Spleen (tissue), 13 donors: ENCODE measurements at regions of chr5 and their contacts with region 1.

Region 1: DNA sequence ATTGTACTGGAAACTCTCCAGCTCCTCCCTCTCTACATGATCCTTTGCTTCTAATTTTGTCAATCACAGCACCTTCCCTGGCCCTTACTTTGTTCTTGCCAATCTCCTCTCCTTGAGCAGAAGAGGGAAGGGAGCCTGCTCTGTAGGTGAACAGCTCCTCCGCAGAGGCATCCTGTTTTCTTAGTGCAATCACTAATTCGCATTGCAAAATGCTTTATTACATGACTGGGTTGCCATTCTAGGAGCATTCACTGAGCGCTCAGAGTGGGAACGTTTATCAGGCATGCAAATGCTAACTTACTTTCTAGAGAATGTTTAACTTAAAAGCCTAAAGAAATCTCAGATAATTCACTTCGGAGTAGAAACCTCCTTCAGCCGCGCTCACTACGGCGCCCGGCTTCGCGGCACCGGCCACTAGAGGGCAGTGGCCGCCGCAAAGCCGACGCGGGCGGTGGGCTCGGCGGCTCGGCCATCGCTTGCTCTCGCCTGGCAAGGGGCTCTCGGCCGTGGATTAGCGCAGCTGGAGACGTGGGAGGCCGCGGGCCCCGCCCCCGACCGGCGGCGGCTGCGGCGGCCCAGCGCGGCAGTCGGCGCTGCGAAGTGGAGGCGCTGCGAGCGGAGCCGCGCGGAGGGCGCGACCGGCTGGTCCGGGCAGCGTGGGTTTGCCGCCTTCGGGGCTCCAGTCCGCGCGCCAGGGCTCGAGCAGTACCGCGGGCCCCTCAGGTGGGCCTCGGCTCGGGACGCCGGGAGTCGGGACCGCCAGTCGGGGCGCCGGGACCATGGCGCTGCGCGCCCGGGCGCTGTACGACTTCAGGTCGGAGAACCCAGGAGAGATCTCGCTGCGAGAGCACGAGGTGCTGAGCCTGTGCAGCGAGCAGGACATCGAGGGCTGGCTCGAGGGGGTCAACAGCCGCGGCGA is at the start of gene SNX18:
- DNase-seq: peak; percentile 99
- H3K4me3 ChIP-seq: peak within 1 kb of the TSS; percentile 70 to 97 (median 90)
- H3K27ac ChIP-seq: peak within 1 kb of the TSS; percentile 84 to 99 (median 96)
- H3K4me1 ChIP-seq: peaks cover 31 to 56% (median 45%) of the 10 kb centered on the region in 6 donors
- H3K27me3 ChIP-seq: no peaks in the 10 kb centered on the region
- CTCF ChIP-seq: peak; percentile 91 to 99 (median 97)
- POLR2A ChIP-seq: peak in 2 of 3 donors; percentile 60 to 61
- total RNA-seq, gene SNX18: 59.2 to 82.5 (median 71.9) TPM

Region 2: GRCh38 chr5:54206580-54207229 is 310.7 kb before region 1 on chr5:
- intact Hi-C with region 1: no loop called
- DNase-seq: no peak
- H3K4me3 ChIP-seq: no peak overlapping the region
- H3K27ac ChIP-seq: no peak overlapping the region
- H3K4me1 ChIP-seq: peaks cover 0 to 21% (median 0%) of the 10 kb centered on the region in 6 donors
- H3K27me3 ChIP-seq: no peaks in the 10 kb centered on the region
- CTCF ChIP-seq: no peak
- POLR2A ChIP-seq: no peak

Region 3: GRCh38 chr5:54390015-54390414 is 127.4 kb before region 1 on chr5:
- intact Hi-C with region 1: no loop called
- DNase-seq: no peak
- H3K4me3 ChIP-seq: no peak overlapping the region
- H3K27ac ChIP-seq: no peak overlapping the region
- H3K4me1 ChIP-seq: no peaks in the 10 kb centered on the region
- H3K27me3 ChIP-seq: no peaks in the 10 kb centered on the region
- CTCF ChIP-seq: no peak
- POLR2A ChIP-seq: no peak

Region 4: DNA sequence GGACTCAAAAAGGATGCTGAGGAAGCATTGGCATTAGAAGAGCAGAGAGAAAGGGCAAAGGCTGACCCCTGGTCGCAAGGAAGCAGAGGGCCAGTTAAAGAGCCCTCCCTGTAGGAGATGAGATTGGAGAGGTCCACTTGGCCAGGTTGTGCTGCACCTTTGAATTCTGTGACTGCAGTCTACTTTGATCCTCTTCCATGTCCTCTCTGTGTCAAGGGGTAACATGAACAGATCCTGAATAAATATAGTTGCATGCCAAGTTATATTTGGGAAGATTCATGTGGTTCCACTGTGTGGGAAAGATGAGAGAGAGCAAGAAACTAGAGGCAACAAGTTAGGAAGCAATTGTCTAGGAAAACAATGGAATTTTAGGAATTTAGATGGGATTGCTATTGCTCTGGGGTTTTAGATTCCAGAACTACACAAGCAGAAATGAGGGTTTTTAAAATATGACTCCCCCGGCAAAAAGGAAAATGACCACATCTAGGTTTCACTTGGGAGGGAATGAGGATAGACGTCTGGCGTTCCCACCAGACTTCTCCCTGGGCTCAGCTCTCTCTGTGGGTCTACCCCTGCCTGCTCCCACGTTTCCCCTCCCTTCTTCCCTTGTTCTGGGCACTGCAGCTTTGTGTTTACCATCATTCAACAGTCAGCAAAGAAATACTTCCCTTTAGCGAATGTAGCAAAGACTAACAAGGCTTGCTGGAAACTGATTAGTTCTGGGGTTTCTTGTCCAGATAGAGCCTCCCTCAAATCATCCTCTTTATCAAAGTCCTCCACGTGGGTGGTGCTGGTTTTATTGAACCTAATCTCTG is 63.8 kb after region 1 on chr5:
- intact Hi-C with region 1: no loop called
- DNase-seq: no peak
- H3K4me3 ChIP-seq: no peak overlapping the region
- H3K27ac ChIP-seq: peak overlapping the region in 6 of 8 donors; percentile 18 to 74 (median 58)
- H3K4me1 ChIP-seq: peaks cover 5 to 35% (median 19%) of the 10 kb centered on the region in 6 donors
- H3K27me3 ChIP-seq: no peaks in the 10 kb centered on the region
- CTCF ChIP-seq: no peak
- POLR2A ChIP-seq: no peak

Region 5: DNA sequence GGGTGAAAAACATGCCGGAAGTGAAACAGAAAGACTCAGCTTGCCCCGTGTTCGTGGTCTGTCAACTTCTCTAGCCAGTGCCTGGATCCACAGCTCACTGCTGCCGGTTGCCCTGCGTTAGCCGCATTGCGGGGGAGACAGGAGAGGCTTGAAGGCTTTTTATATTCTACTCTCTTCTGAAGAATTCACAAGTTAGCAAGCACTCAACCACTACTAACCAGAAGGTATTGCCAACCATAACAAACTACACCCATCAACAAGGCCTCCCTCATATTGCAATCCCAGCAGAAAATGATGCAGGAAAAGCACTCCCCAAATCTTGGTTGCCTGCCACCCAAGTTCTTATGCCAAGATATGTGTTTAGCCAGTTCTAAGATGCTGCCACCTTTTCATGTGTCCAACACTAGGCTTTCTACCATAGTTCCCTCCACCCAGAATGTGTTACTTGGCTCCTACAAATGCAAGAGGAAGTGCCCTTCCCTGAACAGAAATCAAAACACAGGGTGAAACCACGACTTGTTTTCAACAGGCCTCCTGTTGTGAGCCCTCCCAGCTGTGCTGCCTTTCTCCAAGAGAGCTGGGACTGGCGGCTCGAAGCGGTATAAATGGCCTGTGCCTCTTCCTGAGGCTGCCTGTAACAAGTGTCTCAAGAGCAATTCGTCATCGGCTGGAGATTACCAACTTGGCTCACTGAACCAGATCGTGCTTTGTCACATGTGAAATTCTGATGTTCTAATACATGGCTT is 129.1 kb after region 1 on chr5:
- intact Hi-C with region 1: loop called (anchors 10 kb)
- DNase-seq: peak; percentile 94
- H3K4me3 ChIP-seq: peak overlapping the region in 1 of 8 donors; percentile 52
- H3K27ac ChIP-seq: peak overlapping the region; percentile 74 to 93 (median 84)
- H3K4me1 ChIP-seq: peaks cover 8 to 62% (median 42%) of the 10 kb centered on the region in 6 donors
- H3K27me3 ChIP-seq: no peaks in the 10 kb centered on the region
- CTCF ChIP-seq: peak in 3 of 11 experiments; percentile 14 to 18 (median 17)
- POLR2A ChIP-seq: peak in 1 of 3 donors; percentile 25

Region 6: GRCh38 chr5:54825005-54825404 is 307.6 kb after region 1 on chr5:
- intact Hi-C with region 1: no loop called
- DNase-seq: no peak
- H3K4me3 ChIP-seq: no peak overlapping the region
- H3K27ac ChIP-seq: no peak overlapping the region
- H3K4me1 ChIP-seq: peaks cover 0 to 5% (median 0%) of the 10 kb centered on the region in 6 donors
- H3K27me3 ChIP-seq: no peaks in the 10 kb centered on the region
- CTCF ChIP-seq: no peak
- POLR2A ChIP-seq: no peak

Region 7: DNA sequence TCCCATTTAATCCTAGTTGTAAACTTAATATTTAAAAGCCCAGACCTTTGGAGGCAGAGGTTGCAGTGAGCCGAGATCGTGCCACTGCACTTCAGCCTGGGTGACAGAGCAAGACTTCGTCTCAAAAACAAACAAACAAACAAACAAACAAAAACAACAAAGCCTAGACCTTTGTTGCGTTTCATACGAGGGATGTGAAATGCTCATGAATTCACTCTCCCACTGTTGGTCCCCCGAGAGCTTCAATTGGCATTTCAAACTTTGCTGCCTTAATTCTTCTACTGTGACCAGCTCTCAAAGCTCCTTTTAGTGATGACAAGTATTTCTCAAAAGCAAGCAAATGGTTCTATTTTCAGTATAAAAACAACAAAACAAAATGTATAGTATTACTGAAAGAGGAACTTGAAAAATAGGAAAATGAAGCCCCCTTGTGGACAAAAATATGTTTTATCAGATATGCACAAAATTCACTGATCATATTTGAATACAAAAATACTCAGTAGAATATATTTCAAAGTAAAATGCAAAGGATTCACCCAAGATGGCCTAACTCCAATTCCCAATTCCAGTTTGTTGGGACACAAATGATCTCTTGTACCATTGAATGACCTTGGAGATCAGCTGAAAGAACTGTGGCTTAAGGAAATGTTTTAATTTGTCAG is 327.6 kb after region 1 on chr5:
- intact Hi-C with region 1: loop called (anchors 5 kb)
- DNase-seq: no peak
- H3K4me3 ChIP-seq: peak overlapping the region in 2 of 8 donors; percentile 22 to 35
- H3K27ac ChIP-seq: peak overlapping the region in 5 of 8 donors; percentile 57 to 68 (median 64)
- H3K4me1 ChIP-seq: peaks cover 0 to 17% (median 6%) of the 10 kb centered on the region in 6 donors
- H3K27me3 ChIP-seq: peaks cover 0 to 3% (median 0%) of the 10 kb centered on the region in 7 donors
- CTCF ChIP-seq: peak; percentile 49 to 79 (median 70)
- POLR2A ChIP-seq: no peak